Heart left ventricle (tissue), 16 donors: ENCODE measurements at regions of chr14 and their contacts with region 1.

Region 1: GRCh38 chr14:95993768-95994592 is 45.2 kb upstream of the C14orf132 start:
- DNase-seq: peak in 1 of 5 donors; percentile 8
- ATAC-seq: no peak
- H3K4me3 ChIP-seq: no peak overlapping the region
- H3K27ac ChIP-seq: no peak overlapping the region
- H3K4me1 ChIP-seq: no peaks in the 10 kb centered on the region
- H3K27me3 ChIP-seq: peaks cover 0 to 49% (median 10%) of the 10 kb centered on the region in 9 donors
- CTCF ChIP-seq: peak; percentile 65 to 84 (median 78)
- POLR2A ChIP-seq: no peak

Region 2: DNA sequence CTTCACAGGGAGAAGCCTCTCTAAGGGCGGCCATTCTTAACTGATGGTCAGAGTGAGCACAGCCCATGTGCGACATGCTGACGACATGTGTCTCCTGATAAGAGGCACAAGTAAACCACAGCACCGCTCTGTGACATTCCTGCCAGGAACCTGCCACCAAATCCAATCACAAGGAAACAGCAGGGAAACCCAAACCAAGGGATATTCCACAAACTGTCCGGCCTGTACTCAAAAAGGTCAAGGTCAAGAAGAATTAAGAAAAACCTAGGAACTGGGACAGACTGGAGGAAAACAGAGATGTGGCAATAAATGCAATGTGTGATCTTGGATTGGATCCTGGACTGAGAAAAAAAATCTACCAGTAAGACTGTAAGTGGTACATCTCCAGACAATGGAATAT is 569.5 kb before region 1 on chr14:
- intact Hi-C with region 1: loop called in 3 of 10 experiments (anchors 5 to 10 kb)
- DNase-seq: no peak
- ATAC-seq: peak in 3 of 4 donors; percentile 44 to 70 (median 45)
- H3K4me3 ChIP-seq: no peak overlapping the region
- H3K27ac ChIP-seq: no peak overlapping the region
- H3K4me1 ChIP-seq: peaks cover 0 to 5% (median 0%) of the 10 kb centered on the region in 12 donors
- H3K27me3 ChIP-seq: no peaks in the 10 kb centered on the region
- CTCF ChIP-seq: no peak
- POLR2A ChIP-seq: no peak

Region 3: GRCh38 chr14:95442633-95443021 is 551.4 kb before region 1 on chr14:
- intact Hi-C with region 1: loop called in 5 of 10 experiments (anchors 5 to 10 kb)
- DNase-seq: peak; percentile 76 to 84 (median 83)
- ATAC-seq: peak; percentile 90 to 98 (median 94)
- H3K4me3 ChIP-seq: no peak overlapping the region
- H3K27ac ChIP-seq: no peak overlapping the region
- H3K4me1 ChIP-seq: peaks cover 0 to 5% (median 0%) of the 10 kb centered on the region in 12 donors
- H3K27me3 ChIP-seq: no peaks in the 10 kb centered on the region
- CTCF ChIP-seq: peak; percentile 79 to 95 (median 86)
- POLR2A ChIP-seq: no peak

Region 4: DNA sequence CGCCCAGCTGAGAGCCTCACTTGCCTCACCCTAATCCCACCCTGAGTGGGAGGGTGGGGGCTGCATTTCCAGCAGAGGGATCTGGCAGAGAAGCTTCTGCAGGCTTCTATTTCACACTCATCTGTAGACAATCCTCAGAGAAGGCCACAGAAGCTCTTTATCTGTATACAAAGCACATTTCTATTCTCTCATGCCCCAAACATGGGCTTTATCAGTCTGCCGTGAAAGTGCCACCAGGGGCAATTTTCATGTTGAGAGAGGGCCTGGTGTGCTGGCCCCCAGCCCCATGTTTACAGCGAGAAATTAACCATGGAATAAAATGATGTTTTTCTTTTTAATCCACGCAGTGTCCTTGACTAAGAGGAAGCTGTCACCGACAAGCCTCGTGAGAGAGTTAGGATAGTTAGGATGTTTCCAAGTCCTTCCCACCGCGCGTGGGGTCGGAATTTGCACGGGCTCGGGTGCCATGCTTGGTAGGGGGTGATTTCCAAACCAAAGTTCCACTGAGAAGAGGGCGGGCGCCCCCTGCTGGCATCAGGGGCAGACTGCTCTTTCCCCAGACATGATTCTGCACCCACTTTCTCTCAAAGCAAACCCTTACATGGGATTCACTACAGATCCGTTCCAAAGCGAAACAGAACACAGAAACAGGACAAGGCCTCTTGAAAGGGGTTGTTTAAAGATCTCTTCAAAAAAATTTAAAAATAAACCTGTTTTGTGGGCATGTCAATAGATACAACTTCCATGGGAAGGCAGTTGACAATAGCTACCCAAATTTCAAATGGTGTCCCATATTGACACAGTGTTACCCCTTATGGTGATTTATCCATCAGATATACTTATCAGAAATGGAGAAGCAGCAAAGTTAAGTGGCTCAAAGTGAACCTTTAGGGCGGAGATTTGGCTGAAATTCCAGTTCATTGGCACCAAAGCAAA is 281.5 kb after region 1 on chr14:
- intact Hi-C with region 1: loop called in 9 of 10 experiments (anchors 1 to 10 kb)
- DNase-seq: peak; percentile 51 to 78 (median 58)
- ATAC-seq: peak in 3 of 4 donors; percentile 58 to 69 (median 64)
- H3K4me3 ChIP-seq: no peak overlapping the region
- H3K27ac ChIP-seq: no peak overlapping the region
- H3K4me1 ChIP-seq: peaks cover 0 to 8% (median 0%) of the 10 kb centered on the region in 12 donors
- H3K27me3 ChIP-seq: no peaks in the 10 kb centered on the region
- CTCF ChIP-seq: peak; percentile 83 to 96 (median 90)
- POLR2A ChIP-seq: no peak